Activated CD8-positive, alpha-beta T cell treated with anti-CD3 and anti-CD28 coated beads for 36 hours (primary cell): ENCODE measurements at regions of chr3 and their contacts with region 1.

Region 1: DNA sequence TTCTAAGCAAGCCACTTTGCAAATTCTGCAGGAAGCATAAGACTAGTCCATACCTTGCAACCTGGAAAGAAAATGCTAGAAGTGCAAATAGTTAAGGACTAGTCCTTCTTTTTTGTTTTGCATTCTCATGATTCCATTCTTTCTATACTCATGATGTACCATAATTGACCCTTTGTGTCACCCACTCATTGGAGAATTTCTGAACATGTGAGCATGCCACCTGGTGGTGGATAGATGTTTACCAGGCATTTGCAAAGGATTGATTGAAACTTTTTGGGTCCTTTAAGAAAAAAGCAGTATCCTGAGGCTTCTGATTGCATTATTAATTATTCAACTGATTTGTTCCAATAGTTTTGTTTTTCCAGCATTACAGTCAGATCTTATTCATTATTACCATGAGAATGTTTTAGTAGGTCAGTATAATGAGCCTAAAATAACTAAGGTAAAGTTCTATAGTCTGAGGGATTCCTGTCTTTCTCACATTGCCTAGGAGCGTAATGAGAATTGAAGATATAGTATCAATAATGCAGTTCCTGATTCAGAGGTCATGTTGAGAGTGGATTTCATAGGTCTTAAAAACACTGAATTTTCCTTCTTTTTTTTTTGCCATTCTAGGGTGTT is 20.2 kb upstream of the DIPK2A start:
- DNase-seq: peak; percentile 58
- ATAC-seq: peak; percentile 77
- H3K4me3 Mint-ChIP-seq: no peak overlapping the region
- H3K27ac Mint-ChIP-seq: no peak overlapping the region
- H3K4me1 Mint-ChIP-seq: peaks cover 1% of the 10 kb centered on the region
- H3K27me3 Mint-ChIP-seq: peaks cover 9% of the 10 kb centered on the region
- CTCF ChIP-seq: peak; percentile 79

Region 2: DNA sequence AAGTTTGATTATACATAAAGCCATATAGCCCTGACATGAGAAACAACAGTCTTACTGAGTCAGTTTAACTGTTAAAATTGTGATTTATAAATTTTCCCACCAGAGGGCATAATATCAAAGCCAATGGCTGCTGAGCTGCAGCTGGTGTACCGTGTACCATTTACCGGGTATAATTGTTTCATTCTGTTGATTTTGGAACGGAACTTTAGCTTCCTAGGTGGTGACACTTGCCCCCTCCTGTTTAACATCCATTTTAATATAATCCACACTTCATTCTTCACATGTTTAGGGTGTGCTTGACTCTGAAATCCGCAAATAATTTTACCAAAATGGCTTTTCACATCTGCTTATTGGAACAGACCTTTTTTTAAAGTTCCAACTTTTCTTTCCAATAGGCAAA is 176.0 kb before region 1 on chr3:
- CTCF ChIA-PET with region 1: interaction called, 7 read pairs
- POLR2A ChIA-PET with region 1: no interaction called
- intact Hi-C with region 1: loop called (anchors 2 kb)
- DNase-seq: peak; percentile 30
- ATAC-seq: peak; percentile 88
- H3K4me3 Mint-ChIP-seq: no peak overlapping the region
- H3K27ac Mint-ChIP-seq: no peak overlapping the region
- H3K4me1 Mint-ChIP-seq: no peaks in the 10 kb centered on the region
- H3K27me3 Mint-ChIP-seq: no peaks in the 10 kb centered on the region
- CTCF ChIP-seq: peak; percentile 74